ENCODE measurements at regions of chr22 and their contacts with region 1.

Region 1: DNA sequence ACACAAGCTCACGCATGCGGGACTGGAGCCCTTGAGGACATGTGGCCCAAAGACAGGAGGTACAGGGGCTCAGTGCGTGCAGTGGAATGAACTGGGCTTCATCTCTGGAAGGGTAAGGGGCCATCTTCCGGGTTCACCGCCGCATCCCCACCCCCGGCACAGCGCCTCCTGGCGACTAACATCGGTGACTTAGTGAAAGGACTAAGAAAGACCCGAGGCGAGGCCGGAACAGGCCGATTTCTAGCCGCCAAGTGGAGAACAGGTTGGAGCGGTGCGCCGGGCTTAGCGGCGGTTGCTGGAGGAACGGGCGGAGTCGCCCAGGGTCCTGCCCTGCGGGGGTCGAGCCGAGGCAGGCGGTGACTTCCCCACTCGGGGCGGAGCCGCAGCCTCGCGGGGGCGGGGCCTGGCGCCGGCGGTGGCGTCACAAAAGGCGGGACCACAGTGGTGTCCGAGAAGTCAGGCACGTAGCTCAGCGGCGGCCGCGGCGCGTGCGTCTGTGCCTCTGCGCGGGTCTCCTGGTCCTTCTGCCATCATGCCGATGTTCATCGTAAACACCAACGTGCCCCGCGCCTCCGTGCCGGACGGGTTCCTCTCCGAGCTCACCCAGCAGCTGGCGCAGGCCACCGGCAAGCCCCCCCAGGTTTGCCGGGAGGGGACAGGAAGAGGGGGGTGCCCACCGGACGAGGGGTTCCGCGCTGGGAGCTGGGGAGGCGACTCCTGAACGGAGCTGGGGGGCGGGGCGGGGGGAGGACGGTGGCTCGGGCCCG is at the start of gene MIF:
- DNase-seq: peak; percentile 94 to 98 (median 98)
- H3K4me3 ChIP-seq: peak within 1 kb of the TSS; percentile 63 to 81 (median 79)
- H3K27ac ChIP-seq: peak within 1 kb of the TSS; percentile 66 to 90
- H3K4me1 ChIP-seq: peaks cover 4 to 34% (median 25%) of the 10 kb centered on the region in 4 experiments
- H3K27me3 ChIP-seq: no peaks in the 10 kb centered on the region

Region 2: GRCh38 chr22:23857606-23858483 is 36.3 kb before region 1 on chr22 and contains the start of gene SLC2A11:
- CTCF ChIA-PET with region 1: interaction called, 10 read pairs
- POLR2A ChIA-PET with region 1: no interaction called
- DNase-seq: peak; percentile 97 to 99 (median 98)
- H3K4me3 ChIP-seq: peak within 1 kb of the TSS; percentile 60 to 97 (median 81)
- H3K27ac ChIP-seq: peak within 1 kb of the TSS in 1 of 2 experiments; percentile 67
- H3K4me1 ChIP-seq: peaks cover 8 to 26% (median 24%) of the 10 kb centered on the region in 4 experiments
- H3K27me3 ChIP-seq: no peaks in the 10 kb centered on the region

Region 3: DNA sequence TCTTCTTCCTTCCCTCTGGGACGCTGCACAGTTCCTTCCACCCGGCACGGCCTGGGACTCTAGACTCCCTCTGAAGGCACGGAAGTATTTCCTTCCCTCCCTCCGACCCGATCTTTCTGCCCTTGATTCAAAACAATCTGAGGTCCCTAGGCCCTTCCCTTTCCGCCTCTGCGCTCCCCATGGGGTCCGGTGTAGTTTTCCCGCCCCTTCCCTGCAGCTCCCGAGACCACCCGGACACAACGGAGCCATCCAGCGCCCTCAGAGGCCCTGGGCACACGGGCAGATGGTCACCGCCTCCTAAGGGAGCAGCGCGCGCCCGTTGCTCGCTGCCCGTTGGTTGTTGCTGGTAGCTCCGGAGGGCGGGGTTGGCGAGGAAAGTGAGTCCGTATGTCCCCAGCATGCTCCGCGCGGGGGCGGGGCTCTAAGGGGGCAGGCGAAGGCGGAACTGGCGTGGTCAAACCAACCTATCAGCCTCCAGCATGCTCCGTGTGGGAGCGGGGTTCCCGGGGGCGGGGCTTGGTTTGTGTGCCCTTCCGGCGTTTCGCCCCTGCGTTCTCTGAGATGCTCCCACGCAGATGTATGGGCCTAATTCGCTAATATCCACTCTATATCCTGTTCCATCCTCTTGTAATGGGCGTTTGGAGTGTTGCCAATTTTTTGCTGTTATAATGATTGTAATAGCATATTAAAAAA is 19.7 kb after region 1 on chr22:
- CTCF ChIA-PET with region 1: interaction called, 21 read pairs
- POLR2A ChIA-PET with region 1: interaction called, 5 read pairs
- DNase-seq: peak; percentile 98 to 99 (median 99)
- H3K4me3 ChIP-seq: peak overlapping the region; percentile 58 to 89 (median 75)
- H3K27ac ChIP-seq: peak overlapping the region; percentile 62 to 91
- H3K4me1 ChIP-seq: peaks cover 6 to 9% (median 8%) of the 10 kb centered on the region in 4 experiments
- H3K27me3 ChIP-seq: no peaks in the 10 kb centered on the region